Head of caudate nucleus (tissue), 42 donors: ENCODE measurements at regions of chr14 and their contacts with region 1.

Region 1: DNA sequence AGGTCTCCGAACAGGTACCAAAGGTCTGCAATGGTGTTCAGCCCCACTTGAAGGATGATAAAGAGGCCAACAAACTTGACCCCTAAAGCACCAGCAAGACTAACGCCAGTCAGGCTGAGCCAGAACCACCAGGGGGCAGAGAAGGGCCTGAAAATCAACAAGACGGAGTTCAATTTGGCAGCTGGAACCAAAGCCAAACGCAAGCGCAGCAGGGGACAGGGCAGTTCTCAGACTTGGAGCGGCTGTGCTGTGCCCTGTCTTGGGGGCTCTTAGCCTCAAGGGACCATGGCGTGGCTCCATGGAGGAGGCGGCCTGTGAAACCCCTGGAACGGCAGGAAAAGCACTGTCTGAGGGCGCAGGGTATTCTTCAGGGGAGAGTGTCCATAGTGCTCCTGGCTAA is 19.6 kb downstream of the POMT2 start:
- DNase-seq: peak; percentile 69 to 97 (median 91)

Region 2: GRCh38 chr14:77314539-77315457 is 13.7 kb after region 1 on chr14:
- intact Hi-C with region 1: loop called (anchors 1 kb)
- DNase-seq: peak in 8 of 42 donors; percentile 24 to 71 (median 34)

Region 3: GRCh38 chr14:78088916-78089315 is 787.8 kb after region 1 on chr14:
- intact Hi-C with region 1: no loop called
- DNase-seq: no peak